ENCODE measurements at regions of chr6 and their contacts with region 1.

Region 1: DNA sequence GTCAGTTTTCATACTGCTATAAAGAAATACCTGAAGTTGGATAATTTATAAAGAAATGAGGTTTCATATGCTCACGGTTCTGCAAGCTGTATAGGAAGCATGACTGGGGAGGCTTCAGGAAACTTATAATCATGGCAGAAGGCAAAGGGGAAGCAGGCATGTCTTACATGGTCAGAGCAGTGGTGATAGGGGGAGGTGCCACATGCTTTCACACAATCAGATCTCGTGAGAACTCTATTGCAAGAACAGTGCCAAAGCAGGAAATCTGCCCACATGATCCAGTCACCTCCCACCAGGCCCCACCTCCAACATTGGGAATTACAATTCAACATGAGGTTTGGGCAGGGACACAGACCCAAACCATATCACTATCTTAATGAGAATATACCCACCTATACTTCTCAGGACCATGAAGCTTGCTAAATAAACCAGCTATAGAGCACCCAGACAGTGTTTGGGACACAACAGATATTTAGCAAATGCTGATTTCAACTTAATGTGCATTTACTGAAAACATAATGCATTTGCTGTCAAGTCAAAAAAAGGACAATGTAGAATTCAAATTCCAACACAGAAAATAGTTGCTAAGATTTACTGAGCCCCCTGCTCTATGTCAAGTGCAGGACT is 63.8 kb downstream of the TNFRSF21 start:
- DNase-seq: no peak
- H3K4me3 ChIP-seq: no peak overlapping the region
- H3K4me3 Mint-ChIP-seq: no peak overlapping the region
- H3K27ac Mint-ChIP-seq: no peak overlapping the region
- H3K4me1 ChIP-seq: peaks cover 34% of the 10 kb centered on the region
- H3K4me1 Mint-ChIP-seq: peaks cover 25% of the 10 kb centered on the region
- H3K27me3 ChIP-seq: no peaks in the 10 kb centered on the region
- H3K27me3 Mint-ChIP-seq: no peaks in the 10 kb centered on the region
- CTCF ChIP-seq: no peak

Region 2: DNA sequence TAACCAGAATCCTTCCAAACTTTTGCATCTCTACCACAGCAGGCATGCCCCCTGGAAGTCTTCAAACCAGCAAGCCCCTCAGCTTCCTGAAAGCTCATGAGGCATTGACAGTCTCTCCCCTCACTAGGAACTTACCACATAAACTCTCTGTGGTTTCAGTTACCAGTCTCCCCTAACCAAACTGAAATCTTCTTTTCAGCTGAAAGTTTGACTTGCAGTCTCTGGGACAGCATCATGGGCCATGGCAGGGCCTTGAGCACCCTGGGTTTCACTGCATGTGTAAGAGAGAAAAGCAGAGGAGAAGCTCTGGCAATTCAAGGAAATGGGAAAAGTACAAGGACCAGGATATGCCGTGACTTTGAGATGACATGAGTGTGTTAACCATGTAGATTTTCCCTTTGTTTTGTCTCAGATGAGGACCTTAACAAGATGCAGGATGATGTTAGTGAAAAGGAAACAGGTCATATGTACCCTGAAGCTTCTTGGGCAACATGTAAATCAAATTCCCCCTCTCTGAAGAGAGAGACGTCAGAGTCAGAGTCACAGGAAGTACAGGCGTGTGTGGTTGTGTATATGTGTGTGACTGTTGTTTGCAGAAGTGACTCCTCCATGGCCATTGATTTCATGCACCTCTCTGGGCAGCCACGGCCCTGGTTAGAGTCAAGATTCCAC is 42.5 kb before region 1 on chr6:
- CTCF ChIA-PET with region 1: no interaction called
- POLR2A ChIA-PET with region 1: no interaction called
- intact Hi-C with region 1: loop called (anchors 1 kb)
- DNase-seq: no peak
- H3K4me3 ChIP-seq: no peak overlapping the region
- H3K4me3 Mint-ChIP-seq: no peak overlapping the region
- H3K27ac Mint-ChIP-seq: peak overlapping the region; percentile 17
- H3K4me1 ChIP-seq: peaks cover 4% of the 10 kb centered on the region; the same call in 1 of the 2 replicates
- H3K4me1 Mint-ChIP-seq: peaks cover 21% of the 10 kb centered on the region
- H3K27me3 ChIP-seq: no peaks in the 10 kb centered on the region
- H3K27me3 Mint-ChIP-seq: no peaks in the 10 kb centered on the region
- CTCF ChIP-seq: no peak

Region 3: DNA sequence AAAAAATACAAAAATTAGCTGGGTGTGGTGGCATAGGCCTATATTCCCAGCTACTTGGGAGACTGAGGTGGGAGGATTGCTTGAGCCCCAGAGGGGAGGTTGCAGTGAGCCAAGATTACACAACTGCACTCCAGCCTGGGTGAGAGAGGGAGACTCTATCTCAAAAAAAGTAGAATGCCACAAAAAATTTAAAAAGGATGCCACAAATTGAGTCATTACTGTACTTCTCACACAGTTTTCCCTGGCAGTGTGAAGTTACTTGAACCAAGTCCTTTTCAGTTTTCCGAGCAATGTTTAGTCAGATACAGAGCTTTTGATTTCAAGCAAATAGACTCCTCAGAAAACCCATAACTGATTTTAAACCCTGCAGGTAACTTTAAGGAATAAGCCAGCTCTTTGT is 10.5 kb after region 1 on chr6:
- CTCF ChIA-PET with region 1: no interaction called
- POLR2A ChIA-PET with region 1: no interaction called
- intact Hi-C with region 1: no loop called
- DNase-seq: no peak
- H3K4me3 ChIP-seq: no peak overlapping the region
- H3K4me3 Mint-ChIP-seq: no peak overlapping the region
- H3K27ac Mint-ChIP-seq: no peak overlapping the region
- H3K4me1 ChIP-seq: peaks cover 7% of the 10 kb centered on the region; the same call in 1 of the 2 replicates
- H3K4me1 Mint-ChIP-seq: no peaks in the 10 kb centered on the region
- H3K27me3 ChIP-seq: no peaks in the 10 kb centered on the region
- H3K27me3 Mint-ChIP-seq: no peaks in the 10 kb centered on the region
- CTCF ChIP-seq: no peak